K562 (cell line): ENCODE measurements at regions of chr2 and their contacts with region 1.

Region 1: GRCh38 chr2:120343433-120344105 is 2.4 kb upstream of the INHBB start:
- DNase-seq: peak; percentile 54 to 66 (median 62)
- ATAC-seq: peak; percentile 94
- H3K4me3 ChIP-seq: no peak overlapping the region
- H3K27ac ChIP-seq: no peak overlapping the region
- H3K4me1 ChIP-seq: peaks cover 0 to 7% of the 10 kb centered on the region in 2 experiments; a peak in 2 of 5 replicates
- H3K27me3 ChIP-seq: peaks cover 24 to 59% of the 10 kb centered on the region in 2 experiments; a peak in 4 of 5 replicates
- CTCF ChIP-seq: peak; percentile 65 to 81 (median 69)
- EP300 ChIP-seq: no peak
- POLR2A ChIP-seq: no peak
- RAD21 ChIP-seq: peak; percentile 60 to 81

Region 2: DNA sequence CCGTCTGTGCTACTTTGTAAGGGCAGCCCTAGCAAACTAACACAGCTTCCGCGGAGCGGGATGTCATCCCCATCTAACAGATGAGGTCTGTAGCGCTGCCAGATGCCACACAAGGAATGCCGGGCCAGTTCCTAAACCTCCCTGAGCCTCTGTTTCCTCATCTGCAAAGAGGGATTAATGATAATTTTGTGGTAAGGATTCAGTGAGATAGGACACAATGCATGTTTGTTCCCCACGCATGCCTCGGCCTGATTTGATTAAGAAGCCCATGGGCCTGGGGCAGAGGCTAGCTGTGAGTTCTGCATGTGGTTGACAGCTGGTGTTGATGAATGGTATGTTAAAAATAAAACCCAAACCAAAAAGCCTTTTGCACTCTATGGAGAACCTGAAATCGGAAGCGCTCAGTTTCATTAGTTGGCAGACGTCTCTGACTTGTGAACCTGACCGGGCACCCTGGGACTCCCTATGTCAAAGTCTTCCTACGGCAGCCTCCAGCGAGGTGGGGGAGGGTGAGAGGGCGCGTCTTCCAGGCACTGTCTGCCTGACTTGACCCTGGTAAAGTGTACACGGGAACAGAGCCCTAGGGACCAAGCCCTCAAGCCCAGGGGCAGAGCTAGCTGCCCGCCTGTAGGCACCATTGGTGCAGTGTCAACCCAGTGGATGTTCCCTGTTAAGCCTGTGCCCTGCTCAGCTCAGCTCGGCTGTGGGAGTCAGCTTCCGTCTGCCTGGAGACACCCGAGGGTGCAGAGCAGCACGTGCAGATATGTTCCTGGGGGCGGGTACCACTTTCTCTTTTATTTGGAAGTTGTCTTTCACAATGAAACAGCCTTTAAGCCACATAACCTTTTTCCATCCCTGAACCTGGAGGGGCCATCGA is 12.4 kb before region 1 on chr2:
- CTCF ChIA-PET with region 1: no interaction called
- POLR2A ChIA-PET with region 1: no interaction called
- in situ Hi-C with region 1: no loop called
- intact Hi-C with region 1: no loop called
- DNase-seq: no peak
- ATAC-seq: no peak
- H3K4me3 ChIP-seq: no peak overlapping the region
- H3K27ac ChIP-seq: no peak overlapping the region
- H3K4me1 ChIP-seq: no peaks in the 10 kb centered on the region
- H3K27me3 ChIP-seq: peaks cover 58 to 73% of the 10 kb centered on the region in 2 experiments
- CTCF ChIP-seq: no peak
- EP300 ChIP-seq: no peak
- POLR2A ChIP-seq: no peak
- RAD21 ChIP-seq: no peak

Region 3: DNA sequence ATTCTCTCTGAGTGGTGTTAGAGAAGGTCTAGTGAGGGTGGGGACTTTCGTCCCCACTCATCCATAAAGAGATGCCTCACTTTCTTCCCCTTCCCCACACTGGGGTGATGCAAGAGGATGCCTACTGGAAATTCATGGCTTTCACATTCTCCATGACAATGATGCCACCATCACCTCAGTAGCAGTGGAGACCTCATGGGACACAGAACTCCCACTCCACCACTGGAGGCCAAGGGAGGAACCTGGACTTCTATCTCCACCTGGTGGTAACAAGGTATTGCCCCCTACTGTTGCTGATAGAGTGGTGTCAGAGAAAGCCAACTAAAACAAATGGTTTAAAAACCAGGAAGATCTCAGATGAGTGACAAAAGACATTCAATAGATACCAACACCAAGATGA is 113.3 kb after region 1 on chr2:
- CTCF ChIA-PET with region 1: interaction called, 4 read pairs
- POLR2A ChIA-PET with region 1: no interaction called
- in situ Hi-C with region 1: no loop called
- intact Hi-C with region 1: loop called (anchors 5 kb)
- DNase-seq: peak in 2 of 4 experiments; percentile 23 to 36
- ATAC-seq: peak; percentile 78
- H3K4me3 ChIP-seq: no peak overlapping the region
- H3K27ac ChIP-seq: no peak overlapping the region
- H3K4me1 ChIP-seq: peaks cover 0 to 3% of the 10 kb centered on the region in 2 experiments; a peak in 2 of 5 replicates
- H3K27me3 ChIP-seq: peaks cover 0 to 5% of the 10 kb centered on the region in 2 experiments; a peak in 3 of 5 replicates
- CTCF ChIP-seq: peak; percentile 52 to 82 (median 58)
- EP300 ChIP-seq: no peak
- POLR2A ChIP-seq: no peak
- RAD21 ChIP-seq: peak in 1 of 2 experiments; percentile 56; a peak in 2 of 4 replicates

Region 4: GRCh38 chr2:120552800-120553481 is 209.4 kb after region 1 on chr2:
- CTCF ChIA-PET with region 1: no interaction called
- POLR2A ChIA-PET with region 1: no interaction called
- in situ Hi-C with region 1: no loop called
- intact Hi-C with region 1: loop called (anchors 2 kb)
- DNase-seq: peak; percentile 75 to 90 (median 84)
- ATAC-seq: peak; percentile 100
- H3K4me3 ChIP-seq: no peak overlapping the region
- H3K27ac ChIP-seq: no peak overlapping the region
- H3K4me1 ChIP-seq: no peaks in the 10 kb centered on the region
- H3K27me3 ChIP-seq: peaks cover 5 to 18% of the 10 kb centered on the region in 2 experiments; a peak in 3 of 5 replicates
- CTCF ChIP-seq: peak; percentile 72 to 84 (median 81)
- EP300 ChIP-seq: no peak
- POLR2A ChIP-seq: no peak
- RAD21 ChIP-seq: peak; percentile 42 to 65

Region 5: GRCh38 chr2:120680136-120680761 is 336.7 kb after region 1 on chr2:
- CTCF ChIA-PET with region 1: interaction called, 6 read pairs
- POLR2A ChIA-PET with region 1: no interaction called
- in situ Hi-C with region 1: loop called (anchors 10 kb)
- intact Hi-C with region 1: loop called (anchors 2 kb)
- DNase-seq: peak; percentile 71 to 86 (median 78)
- ATAC-seq: peak; percentile 96
- H3K4me3 ChIP-seq: no peak overlapping the region
- H3K27ac ChIP-seq: no peak overlapping the region
- H3K4me1 ChIP-seq: peaks cover 0 to 5% of the 10 kb centered on the region in 2 experiments; a peak in 2 of 5 replicates
- H3K27me3 ChIP-seq: peaks cover 2 to 20% of the 10 kb centered on the region in 2 experiments; a peak in 3 of 5 replicates
- CTCF ChIP-seq: peak; percentile 74 to 78 (median 75)
- EP300 ChIP-seq: no peak
- POLR2A ChIP-seq: no peak
- RAD21 ChIP-seq: peak; percentile 73 to 87